ENCODE measurements at regions of chr17 and their contacts with region 1.

Region 1: DNA sequence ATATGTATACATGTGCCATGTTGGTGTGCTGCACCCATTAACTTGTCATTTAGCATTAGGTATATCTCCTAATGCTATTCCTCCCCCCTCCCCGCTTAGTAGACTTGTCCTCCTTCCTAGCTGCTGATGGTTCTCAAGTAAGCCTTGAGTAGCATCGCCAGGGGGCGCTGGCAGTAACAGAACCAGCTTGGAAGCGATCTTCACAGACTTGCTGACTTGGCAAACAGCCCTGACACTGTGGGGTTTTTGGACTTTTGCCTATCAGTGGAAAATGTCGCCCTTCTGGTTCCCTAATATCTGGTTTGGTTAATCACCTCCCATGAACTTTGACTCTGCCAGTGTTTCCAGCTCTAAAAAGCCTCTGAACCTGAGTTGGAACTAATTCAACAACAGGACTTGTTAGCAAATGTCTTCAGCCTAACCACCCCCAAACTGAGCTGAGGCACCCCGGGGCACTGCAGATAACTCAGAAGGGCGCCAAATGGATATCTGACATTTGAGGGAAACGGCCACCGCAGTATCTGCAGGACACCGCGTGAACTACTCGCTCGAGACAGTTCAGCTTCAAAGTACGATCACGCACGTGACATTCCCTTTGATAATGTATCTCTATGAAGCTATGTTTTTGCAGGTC is 15.4 kb upstream of the SPATA32 start:
- DNase-seq: peak; percentile 96
- H3K4me3 Mint-ChIP-seq: no peak overlapping the region
- H3K27ac Mint-ChIP-seq: peak overlapping the region; percentile 22
- H3K4me1 Mint-ChIP-seq: peaks cover 11% of the 10 kb centered on the region
- H3K27me3 Mint-ChIP-seq: no peaks in the 10 kb centered on the region

Region 2: DNA sequence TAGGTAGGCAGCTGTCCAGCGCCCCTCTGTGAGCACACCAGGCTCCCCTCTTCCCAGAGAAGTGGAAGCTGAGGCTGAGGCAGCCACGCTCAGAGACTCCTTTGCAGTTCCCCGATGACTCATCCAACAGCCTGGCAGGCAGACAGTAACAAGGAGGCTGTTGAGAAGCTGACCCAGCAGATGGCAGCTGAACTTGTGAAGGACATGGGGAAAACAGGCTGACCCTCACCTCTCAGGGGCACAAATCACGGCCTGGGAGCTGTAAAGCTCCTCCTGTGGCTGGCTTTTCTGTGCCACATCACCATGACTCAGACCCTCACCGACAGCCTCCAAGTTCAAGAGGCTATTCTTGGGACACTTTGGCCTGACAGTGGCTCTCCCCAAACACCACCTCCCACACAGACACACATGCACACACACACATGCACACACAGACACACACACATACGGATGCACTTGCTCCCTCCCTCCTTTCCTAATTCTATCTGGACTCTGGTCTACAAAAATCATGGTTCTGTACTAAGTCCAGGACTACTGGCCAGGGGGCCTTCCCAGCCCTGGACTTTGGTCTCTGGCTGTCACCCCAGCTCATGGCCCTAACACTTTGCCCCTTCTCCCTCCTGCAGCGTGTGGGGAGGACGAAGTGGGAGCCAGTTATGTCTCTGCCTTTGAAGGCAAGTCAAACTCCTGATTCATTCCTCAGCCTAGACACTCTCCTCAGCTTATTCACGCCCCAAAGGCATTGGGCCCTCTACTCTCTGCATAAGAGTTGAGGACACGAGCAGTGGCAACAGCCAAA is 16.3 kb after region 1 on chr17:
- CTCF ChIA-PET with region 1: interaction called, 18 read pairs
- intact Hi-C with region 1: no loop called
- DNase-seq: peak; percentile 60
- H3K4me3 Mint-ChIP-seq: no peak overlapping the region
- H3K27ac Mint-ChIP-seq: peak overlapping the region; percentile 68
- H3K4me1 Mint-ChIP-seq: peaks cover 57% of the 10 kb centered on the region
- H3K27me3 Mint-ChIP-seq: no peaks in the 10 kb centered on the region

Region 3: GRCh38 chr17:45307290-45308015 is 30.1 kb after region 1 on chr17:
- CTCF ChIA-PET with region 1: interaction called, 28 read pairs
- intact Hi-C with region 1: no loop called
- DNase-seq: peak; percentile 77
- H3K4me3 Mint-ChIP-seq: peak overlapping the region; percentile 48
- H3K27ac Mint-ChIP-seq: peak overlapping the region; percentile 91
- H3K4me1 Mint-ChIP-seq: peaks cover 87% of the 10 kb centered on the region
- H3K27me3 Mint-ChIP-seq: no peaks in the 10 kb centered on the region

Region 4: GRCh38 chr17:45317112-45317928 is 40.0 kb after region 1 on chr17:
- CTCF ChIA-PET with region 1: interaction called, 43 read pairs
- intact Hi-C with region 1: loop called (anchors 1 kb)
- DNase-seq: peak; percentile 100
- H3K4me3 Mint-ChIP-seq: peak overlapping the region; percentile 85
- H3K27ac Mint-ChIP-seq: peak overlapping the region; percentile 86
- H3K4me1 Mint-ChIP-seq: peaks cover 67% of the 10 kb centered on the region
- H3K27me3 Mint-ChIP-seq: no peaks in the 10 kb centered on the region

Region 5: DNA sequence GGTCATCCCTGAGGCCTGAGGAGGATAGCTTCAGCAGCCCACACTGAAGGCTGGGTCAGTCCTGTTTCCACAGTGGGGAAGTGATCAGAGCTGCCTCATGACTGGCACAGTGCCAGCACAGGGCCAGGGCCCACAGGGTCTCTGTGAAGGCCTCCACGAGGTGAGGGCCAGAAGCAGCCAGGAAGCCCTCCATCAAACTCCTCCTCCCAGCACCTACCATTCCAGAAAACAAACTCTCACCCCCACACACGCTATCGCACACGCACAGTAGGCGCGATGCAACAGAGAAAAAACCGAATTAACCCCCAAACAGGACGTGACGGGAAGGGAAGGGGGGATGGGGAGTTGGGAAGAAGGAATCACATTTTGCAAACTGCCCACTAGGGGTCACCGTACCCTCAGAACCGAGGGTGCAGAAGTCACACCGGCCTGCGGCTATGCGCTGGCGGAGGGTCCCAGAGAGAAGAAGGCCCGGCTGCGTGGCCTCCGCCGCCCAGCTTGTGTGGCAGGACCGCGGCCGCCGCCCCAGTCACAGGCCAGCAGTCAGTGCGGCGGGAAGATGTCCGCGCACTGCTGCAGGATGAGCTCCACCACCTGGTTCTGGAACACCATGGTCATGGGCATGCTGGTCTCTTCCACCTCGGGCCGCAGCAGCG is 117.7 kb after region 1 on chr17:
- CTCF ChIA-PET with region 1: interaction called, 116 read pairs
- intact Hi-C with region 1: no loop called
- DNase-seq: peak; percentile 64
- H3K4me3 Mint-ChIP-seq: no peak overlapping the region
- H3K27ac Mint-ChIP-seq: peak overlapping the region; percentile 4
- H3K4me1 Mint-ChIP-seq: no peaks in the 10 kb centered on the region
- H3K27me3 Mint-ChIP-seq: no peaks in the 10 kb centered on the region